ENCODE measurements at regions of chrX and their contacts with region 1.

Region 1: DNA sequence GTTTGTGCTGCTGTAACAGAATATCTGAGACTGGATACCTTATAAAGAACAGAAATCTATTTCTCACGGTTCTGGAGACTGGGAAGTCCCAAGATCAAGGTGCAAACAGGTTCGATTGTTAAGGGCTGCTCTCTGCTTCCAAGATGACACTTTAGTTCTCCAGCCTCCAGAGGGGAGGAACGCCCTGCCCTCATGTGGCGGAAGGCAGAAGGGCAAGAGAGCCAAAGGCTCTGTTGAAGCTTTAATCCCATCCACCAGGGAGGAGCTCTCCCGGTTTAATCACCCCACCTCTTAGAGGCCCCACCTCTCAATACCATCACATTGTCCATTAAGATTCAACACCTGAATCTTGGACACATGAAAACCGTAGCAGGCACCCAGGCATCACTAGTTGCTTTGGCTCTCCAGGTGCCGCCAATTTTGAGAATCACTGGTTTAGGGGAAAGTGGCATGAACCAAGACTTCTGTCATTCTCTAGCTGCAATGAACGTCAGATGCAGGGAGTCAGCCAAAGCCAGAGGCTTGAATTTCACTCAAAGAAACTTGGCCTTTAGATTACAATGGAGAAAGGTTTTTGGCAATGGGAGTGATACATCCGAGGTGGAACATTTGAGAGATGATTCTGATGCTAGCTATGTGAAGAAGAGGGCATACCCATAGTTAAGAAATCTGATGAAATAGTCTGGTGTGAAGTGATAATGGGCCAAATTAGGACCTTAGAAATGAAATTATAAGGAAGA is 15.7 kb downstream of the FHL1 start:
- DNase-seq: peak; percentile 70
- H3K4me3 Mint-ChIP-seq: no peak overlapping the region
- H3K27ac Mint-ChIP-seq: no peak overlapping the region
- H3K4me1 Mint-ChIP-seq: peaks cover 6% of the 10 kb centered on the region
- H3K27me3 Mint-ChIP-seq: peaks cover 82% of the 10 kb centered on the region
- CTCF ChIP-seq: peak; percentile 70

Region 2: DNA sequence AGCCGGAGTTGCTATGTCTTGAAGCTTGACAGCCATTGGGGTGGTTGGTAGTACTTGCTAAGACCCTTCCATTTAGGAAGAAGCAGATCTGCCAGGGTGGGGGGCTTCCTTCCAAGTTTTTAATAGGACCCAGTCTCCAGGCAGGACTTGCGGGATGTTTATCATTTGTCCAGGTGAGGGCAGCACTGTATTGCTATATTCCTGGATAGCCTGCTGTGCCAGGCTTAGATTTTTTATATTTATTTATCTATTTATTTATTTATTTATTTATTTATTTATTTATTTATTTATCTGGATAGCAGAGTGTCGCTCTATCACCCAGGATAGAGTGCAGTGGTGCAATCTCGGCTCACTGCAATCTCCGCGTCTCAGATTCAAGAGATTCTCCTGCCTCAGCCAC is 537.0 kb before region 1 on chrX:
- CTCF ChIA-PET with region 1: interaction called, 3 read pairs
- POLR2A ChIA-PET with region 1: no interaction called
- intact Hi-C with region 1: loop called (anchors 5 kb)
- DNase-seq: peak; percentile 36
- H3K4me3 Mint-ChIP-seq: no peak overlapping the region
- H3K27ac Mint-ChIP-seq: no peak overlapping the region
- H3K4me1 Mint-ChIP-seq: no peaks in the 10 kb centered on the region
- H3K27me3 Mint-ChIP-seq: peaks cover 3% of the 10 kb centered on the region
- CTCF ChIP-seq: peak; percentile 16

Region 3: DNA sequence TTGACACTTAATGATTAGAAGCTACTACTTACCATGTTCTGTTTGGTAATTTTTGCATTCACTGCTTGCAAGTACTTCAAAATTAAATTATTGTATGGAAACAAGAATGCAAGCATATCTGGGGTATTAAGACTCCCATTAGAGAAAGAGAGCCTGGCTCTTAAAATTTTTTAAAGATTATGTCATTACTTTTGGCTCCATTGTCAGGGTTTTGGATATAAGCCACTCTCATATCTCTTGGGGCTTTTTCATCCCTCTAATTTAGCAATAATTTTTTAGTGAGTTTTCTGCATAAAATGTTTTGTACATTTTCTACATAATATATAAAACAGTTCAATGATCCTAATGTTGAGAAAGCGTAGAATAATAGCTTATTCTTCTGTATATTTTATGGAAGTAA is 128.3 kb before region 1 on chrX:
- CTCF ChIA-PET with region 1: interaction called, 109 read pairs
- POLR2A ChIA-PET with region 1: no interaction called
- intact Hi-C with region 1: no loop called
- DNase-seq: no peak
- H3K4me3 Mint-ChIP-seq: no peak overlapping the region
- H3K27ac Mint-ChIP-seq: no peak overlapping the region
- H3K4me1 Mint-ChIP-seq: no peaks in the 10 kb centered on the region
- H3K27me3 Mint-ChIP-seq: peaks cover 27% of the 10 kb centered on the region
- CTCF ChIP-seq: no peak

Region 4: GRCh38 chrX:136209016-136209738 is 46.2 kb after region 1 on chrX:
- CTCF ChIA-PET with region 1: interaction called, 13 read pairs
- POLR2A ChIA-PET with region 1: interaction called, 4 read pairs
- intact Hi-C with region 1: loop called (anchors 2 kb)
- DNase-seq: peak; percentile 38
- H3K4me3 Mint-ChIP-seq: no peak overlapping the region
- H3K27ac Mint-ChIP-seq: no peak overlapping the region
- H3K4me1 Mint-ChIP-seq: peaks cover 2% of the 10 kb centered on the region
- H3K27me3 Mint-ChIP-seq: peaks cover 72% of the 10 kb centered on the region
- CTCF ChIP-seq: peak; percentile 42

Measured in MCF 10A (cell line).